CD4-positive, alpha-beta memory T cell (primary cell): ENCODE measurements at regions of chr15 and their contacts with region 1.

Region 1: DNA sequence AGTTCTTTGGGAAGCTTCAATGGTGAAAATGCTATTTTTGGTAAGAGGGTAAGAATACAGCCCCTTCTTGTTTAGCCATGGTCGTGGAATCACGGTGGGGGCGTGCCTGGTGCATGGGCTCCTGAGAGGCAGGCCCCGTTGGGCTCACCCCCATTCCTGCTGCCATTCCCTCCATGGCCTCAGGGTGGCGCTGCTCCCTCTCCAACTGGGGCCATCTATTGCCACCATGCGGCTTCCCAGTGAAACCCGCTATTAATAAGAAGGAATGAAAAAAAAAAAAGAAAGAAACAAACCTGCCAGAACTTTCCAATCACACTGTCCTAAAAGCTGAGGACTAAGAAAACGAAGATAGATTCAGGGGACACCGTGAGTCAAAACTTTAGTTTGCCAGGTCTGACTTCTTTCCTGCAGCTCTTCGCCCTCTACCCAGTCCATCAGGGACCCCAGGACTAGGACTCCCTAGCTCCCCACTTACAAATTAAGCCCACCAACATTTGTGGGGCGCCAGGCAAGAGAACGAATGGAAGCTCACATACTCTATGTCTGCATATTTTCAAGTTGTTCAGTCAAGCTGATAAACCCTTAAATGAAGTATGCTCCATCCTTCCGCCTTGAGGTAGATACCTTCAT is 30.6 kb upstream of the ABHD2 start:
- DNase-seq: peak; percentile 75 to 84 (median 79)
- H3K4me3 ChIP-seq: no peak overlapping the region
- H3K4me3 Mint-ChIP-seq: no peak overlapping the region
- H3K27ac ChIP-seq: no peak overlapping the region
- H3K27ac Mint-ChIP-seq: no peak overlapping the region
- H3K4me1 ChIP-seq: no peaks in the 10 kb centered on the region
- H3K4me1 Mint-ChIP-seq: peaks cover 0 to 12% (median 7%) of the 10 kb centered on the region in 4 donors
- H3K27me3 ChIP-seq: no peaks in the 10 kb centered on the region
- H3K27me3 Mint-ChIP-seq: no peaks in the 10 kb centered on the region

Region 2: GRCh38 chr15:89034288-89034687 is 23.3 kb before region 1 on chr15:
- CTCF ChIA-PET with region 1: interaction called, 12 read pairs
- POLR2A ChIA-PET with region 1: no interaction called
- intact Hi-C with region 1: no loop called
- DNase-seq: peak in 1 of 5 donors; percentile 13
- H3K4me3 ChIP-seq: no peak overlapping the region
- H3K4me3 Mint-ChIP-seq: no peak overlapping the region
- H3K27ac ChIP-seq: no peak overlapping the region
- H3K27ac Mint-ChIP-seq: peak overlapping the region in 1 of 7 donors; percentile 11
- H3K4me1 ChIP-seq: no peaks in the 10 kb centered on the region
- H3K4me1 Mint-ChIP-seq: no peaks in the 10 kb centered on the region
- H3K27me3 ChIP-seq: no peaks in the 10 kb centered on the region
- H3K27me3 Mint-ChIP-seq: peaks cover 9 to 15% of the 10 kb centered on the region in 2 donors

Region 3: DNA sequence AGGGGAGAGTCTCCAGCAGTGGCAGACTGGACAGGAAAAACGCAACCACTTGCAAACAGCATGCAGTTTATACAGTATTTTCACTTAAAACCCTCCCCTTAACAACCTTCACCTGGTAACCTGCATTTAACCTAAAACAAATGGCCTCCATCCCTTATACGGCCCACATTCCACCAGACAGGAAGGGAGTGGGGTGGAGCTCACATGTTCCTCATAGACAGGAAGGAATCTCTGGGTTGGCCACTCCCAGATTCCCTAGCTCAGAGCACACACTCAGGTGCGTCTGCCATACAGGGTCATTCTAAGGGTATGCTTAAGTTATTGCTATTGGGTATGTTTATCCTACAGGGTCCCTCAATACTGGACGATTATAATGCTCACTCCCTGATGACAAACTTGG is 13.8 kb after region 1 on chr15:
- CTCF ChIA-PET with region 1: interaction called, 10 read pairs
- POLR2A ChIA-PET with region 1: no interaction called
- intact Hi-C with region 1: no loop called
- DNase-seq: no peak
- H3K4me3 ChIP-seq: no peak overlapping the region
- H3K4me3 Mint-ChIP-seq: no peak overlapping the region
- H3K27ac ChIP-seq: no peak overlapping the region
- H3K27ac Mint-ChIP-seq: no peak overlapping the region
- H3K4me1 ChIP-seq: no peaks in the 10 kb centered on the region
- H3K4me1 Mint-ChIP-seq: peaks cover 0 to 1% (median 0%) of the 10 kb centered on the region in 4 donors
- H3K27me3 ChIP-seq: peaks cover 3% of the 10 kb centered on the region
- H3K27me3 Mint-ChIP-seq: no peaks in the 10 kb centered on the region

Region 4: GRCh38 chr15:89119489-89120123 is 62.0 kb after region 1 on chr15:
- CTCF ChIA-PET with region 1: interaction called, 15 read pairs
- POLR2A ChIA-PET with region 1: no interaction called
- intact Hi-C with region 1: no loop called
- DNase-seq: no peak
- H3K4me3 ChIP-seq: no peak overlapping the region
- H3K4me3 Mint-ChIP-seq: no peak overlapping the region
- H3K27ac ChIP-seq: no peak overlapping the region
- H3K27ac Mint-ChIP-seq: peak overlapping the region in 4 of 7 donors; percentile 8 to 51 (median 25)
- H3K4me1 ChIP-seq: no peaks in the 10 kb centered on the region
- H3K4me1 Mint-ChIP-seq: peaks cover 0 to 8% (median 5%) of the 10 kb centered on the region in 4 donors
- H3K27me3 ChIP-seq: no peaks in the 10 kb centered on the region
- H3K27me3 Mint-ChIP-seq: no peaks in the 10 kb centered on the region

Region 5: GRCh38 chr15:89171136-89172072 is 113.8 kb after region 1 on chr15:
- CTCF ChIA-PET with region 1: interaction called, 221 read pairs
- POLR2A ChIA-PET with region 1: interaction called, 3 read pairs
- intact Hi-C with region 1: no loop called
- DNase-seq: peak in 2 of 5 donors; percentile 22 to 24
- H3K4me3 ChIP-seq: no peak overlapping the region
- H3K4me3 Mint-ChIP-seq: no peak overlapping the region
- H3K27ac ChIP-seq: no peak overlapping the region
- H3K27ac Mint-ChIP-seq: no peak overlapping the region
- H3K4me1 ChIP-seq: peaks cover 12% of the 10 kb centered on the region
- H3K4me1 Mint-ChIP-seq: peaks cover 4 to 10% (median 6%) of the 10 kb centered on the region in 4 donors
- H3K27me3 ChIP-seq: no peaks in the 10 kb centered on the region
- H3K27me3 Mint-ChIP-seq: no peaks in the 10 kb centered on the region

Region 6: DNA sequence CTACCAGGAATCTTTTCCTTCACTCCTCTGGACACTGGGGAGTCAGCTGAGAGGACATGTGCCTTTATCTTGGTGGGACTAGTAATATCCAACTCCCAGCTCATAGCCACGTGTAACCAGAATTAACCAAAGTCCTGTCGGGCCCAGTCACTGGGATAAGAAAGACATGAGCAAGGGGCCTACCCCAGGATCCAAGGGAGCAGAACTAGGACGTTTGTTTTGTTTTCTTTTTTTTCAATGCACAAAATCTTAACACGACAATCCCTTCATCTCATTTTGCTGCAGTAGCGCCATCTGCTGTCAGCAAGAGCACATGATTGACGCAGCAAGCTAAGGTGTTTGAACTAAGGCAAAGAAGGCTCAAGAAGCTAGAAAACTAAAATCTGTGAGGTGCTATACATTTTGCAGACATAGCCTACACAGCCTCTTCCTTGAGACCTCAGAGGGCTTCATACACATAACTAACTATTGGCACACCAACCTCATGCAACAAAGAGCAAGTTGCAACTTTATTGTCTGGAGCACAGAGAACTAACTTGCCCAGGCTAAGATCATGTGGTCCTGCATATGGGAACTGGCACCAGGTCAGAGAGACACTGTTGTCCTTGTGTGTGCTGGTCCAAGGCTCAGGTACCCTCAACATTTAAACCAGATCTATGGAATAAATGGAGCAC is 120.2 kb after region 1 on chr15:
- CTCF ChIA-PET with region 1: interaction called, 221 read pairs
- POLR2A ChIA-PET with region 1: interaction called, 3 read pairs
- intact Hi-C with region 1: loop called (anchors 1 kb)
- DNase-seq: peak; percentile 45 to 64 (median 55)
- H3K4me3 ChIP-seq: no peak overlapping the region
- H3K4me3 Mint-ChIP-seq: no peak overlapping the region
- H3K27ac ChIP-seq: no peak overlapping the region
- H3K27ac Mint-ChIP-seq: peak overlapping the region in 4 of 7 donors; percentile 20 to 48 (median 30)
- H3K4me1 ChIP-seq: no peaks in the 10 kb centered on the region
- H3K4me1 Mint-ChIP-seq: peaks cover 4 to 8% (median 7%) of the 10 kb centered on the region in 4 donors
- H3K27me3 ChIP-seq: no peaks in the 10 kb centered on the region
- H3K27me3 Mint-ChIP-seq: no peaks in the 10 kb centered on the region